Ovary (tissue), 10 donors: ENCODE measurements at regions of chr2 and their contacts with region 1.

Region 1: GRCh38 chr2:172931918-172932520 is 143.6 kb upstream of the MAP3K20 start:
- DNase-seq: peak; percentile 72 to 83 (median 75)
- H3K4me3 ChIP-seq: no peak overlapping the region
- H3K27ac ChIP-seq: no peak overlapping the region
- H3K4me1 ChIP-seq: peaks cover 4% of the 10 kb centered on the region
- H3K27me3 ChIP-seq: no peaks in the 10 kb centered on the region
- CTCF ChIP-seq: peak in 2 of 3 donors; percentile 45 to 64
- EP300 ChIP-seq: no peak
- POLR2A ChIP-seq: no peak

Region 2: DNA sequence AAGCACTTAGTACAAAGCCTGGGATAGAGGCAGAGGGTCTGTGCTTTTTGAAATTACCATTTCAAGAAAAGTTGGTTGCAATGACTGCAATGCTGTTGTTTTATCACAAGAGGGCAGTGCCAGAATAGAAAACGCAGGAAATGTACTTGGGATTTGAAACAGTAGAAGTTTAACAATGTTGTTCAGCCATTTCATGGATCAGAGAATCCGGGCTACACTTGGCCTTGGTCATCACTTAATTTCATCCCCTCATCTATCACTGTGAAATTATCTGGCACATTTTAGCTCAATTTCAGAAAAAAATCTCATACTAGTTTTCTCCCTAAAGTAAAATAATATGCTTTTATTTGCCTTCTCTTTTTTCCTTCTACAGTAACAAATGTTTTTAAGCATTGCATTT is 125.5 kb before region 1 on chr2:
- intact Hi-C with region 1: loop called in 3 of 4 experiments (anchors 2 to 5 kb)
- DNase-seq: no peak
- H3K4me3 ChIP-seq: no peak overlapping the region
- H3K27ac ChIP-seq: no peak overlapping the region
- H3K4me1 ChIP-seq: no peaks in the 10 kb centered on the region
- H3K27me3 ChIP-seq: no peaks in the 10 kb centered on the region
- CTCF ChIP-seq: peak; percentile 61 to 74 (median 68)
- EP300 ChIP-seq: no peak
- POLR2A ChIP-seq: no peak

Region 3: DNA sequence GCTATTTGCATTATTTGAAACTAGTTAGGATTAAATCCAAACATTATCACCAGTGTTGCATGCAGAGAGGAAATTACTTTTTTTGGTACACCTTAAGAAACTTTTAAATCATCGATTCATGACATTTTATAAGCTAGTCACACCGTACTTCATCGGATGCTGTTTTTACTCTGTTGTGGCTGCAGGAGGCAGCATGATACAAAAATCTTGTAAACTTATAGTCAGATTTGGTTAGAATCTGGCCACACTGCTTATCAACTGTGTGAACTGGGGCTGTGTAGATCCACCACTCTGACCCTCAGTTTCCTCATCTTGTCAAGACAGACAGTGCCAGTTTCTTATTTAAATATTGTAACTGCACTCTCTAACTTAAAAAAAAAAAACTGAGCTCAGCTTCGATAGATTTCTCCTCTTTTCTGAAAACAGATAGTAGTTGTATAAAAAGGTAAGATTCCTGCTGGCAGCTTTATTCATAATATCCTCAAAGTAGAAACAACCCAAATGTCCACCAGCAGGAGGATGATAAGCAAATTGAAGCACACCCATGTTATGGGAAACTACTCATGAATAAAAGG is 118.6 kb before region 1 on chr2:
- intact Hi-C with region 1: loop called in 3 of 4 experiments (anchors 2 to 5 kb)
- DNase-seq: no peak
- H3K4me3 ChIP-seq: no peak overlapping the region
- H3K27ac ChIP-seq: no peak overlapping the region
- H3K4me1 ChIP-seq: no peaks in the 10 kb centered on the region
- H3K27me3 ChIP-seq: no peaks in the 10 kb centered on the region
- CTCF ChIP-seq: peak in 1 of 3 donors; percentile 24
- EP300 ChIP-seq: no peak
- POLR2A ChIP-seq: no peak

Region 4: DNA sequence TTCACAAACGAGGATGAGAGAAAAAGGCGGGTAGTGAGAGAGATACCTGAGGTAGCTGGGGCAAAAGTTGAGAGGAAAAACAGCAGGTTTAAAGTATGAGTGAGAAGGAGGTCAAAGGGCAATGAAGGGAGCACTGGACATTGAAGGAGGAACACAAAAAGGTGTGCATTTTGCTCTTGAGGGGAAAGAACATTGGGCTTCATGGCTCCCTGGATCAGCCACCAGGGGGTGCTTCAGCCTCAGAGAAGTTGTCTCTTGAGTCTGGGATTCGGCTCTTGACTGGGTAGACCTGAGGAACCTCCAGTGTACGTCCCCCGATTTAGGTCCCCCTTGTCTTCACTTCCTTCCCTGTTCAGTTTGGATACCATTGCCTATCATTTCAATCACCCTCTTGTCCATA is 67.8 kb before region 1 on chr2:
- intact Hi-C with region 1: loop called in 2 of 4 experiments (anchors 10 kb)
- DNase-seq: peak; percentile 31 to 76 (median 52)
- H3K4me3 ChIP-seq: no peak overlapping the region
- H3K27ac ChIP-seq: no peak overlapping the region
- H3K4me1 ChIP-seq: no peaks in the 10 kb centered on the region
- H3K27me3 ChIP-seq: no peaks in the 10 kb centered on the region
- CTCF ChIP-seq: peak in 2 of 3 donors; percentile 16 to 39
- EP300 ChIP-seq: no peak
- POLR2A ChIP-seq: no peak

Region 5: DNA sequence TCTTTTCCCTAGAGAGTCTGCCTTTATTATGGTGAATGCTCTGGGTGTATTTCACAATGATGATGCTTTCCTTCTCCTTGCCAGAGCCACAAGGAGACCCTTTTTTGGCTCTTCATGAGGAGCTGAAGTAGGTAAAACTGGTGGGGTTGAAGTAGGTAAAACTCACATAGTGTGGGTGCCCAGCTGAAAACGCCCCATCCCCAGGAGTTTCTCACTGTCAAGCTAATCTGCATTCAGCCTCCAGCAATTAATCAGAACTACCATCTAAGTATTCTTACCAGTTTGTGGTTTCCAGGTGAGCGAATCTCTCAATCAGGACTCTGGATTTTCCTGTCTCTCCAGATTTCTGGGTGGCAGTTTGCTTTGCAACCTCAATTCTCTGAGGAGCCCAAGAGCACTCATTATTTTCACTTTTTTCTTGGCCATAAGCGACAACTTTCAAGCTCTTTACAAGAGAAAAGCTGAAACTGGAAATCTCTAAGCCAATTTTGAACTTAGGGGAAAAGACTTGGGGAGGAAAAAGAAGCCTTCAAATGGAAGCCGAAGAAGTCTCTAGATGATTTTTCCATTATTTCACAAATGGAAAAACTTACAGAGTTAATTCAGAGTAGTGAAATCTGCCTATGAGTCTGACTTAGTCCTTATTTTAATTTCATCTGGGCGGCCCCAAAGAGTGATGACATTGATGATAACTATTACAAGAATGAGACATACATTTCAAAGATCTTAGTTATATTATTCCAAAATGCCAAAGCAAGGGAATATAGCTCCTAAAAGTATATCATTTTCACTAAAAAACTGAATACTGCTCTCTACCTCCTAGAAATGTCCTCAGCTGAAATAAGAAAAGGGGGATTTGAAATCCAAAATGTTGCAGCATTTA is 22.2 kb after region 1 on chr2:
- intact Hi-C with region 1: no loop called
- DNase-seq: no peak
- H3K4me3 ChIP-seq: no peak overlapping the region
- H3K27ac ChIP-seq: no peak overlapping the region
- H3K4me1 ChIP-seq: no peaks in the 10 kb centered on the region
- H3K27me3 ChIP-seq: no peaks in the 10 kb centered on the region
- CTCF ChIP-seq: no peak
- EP300 ChIP-seq: no peak
- POLR2A ChIP-seq: no peak